A549 (cell line): ENCODE measurements at regions of chr7 and their contacts with region 1.

Region 1: DNA sequence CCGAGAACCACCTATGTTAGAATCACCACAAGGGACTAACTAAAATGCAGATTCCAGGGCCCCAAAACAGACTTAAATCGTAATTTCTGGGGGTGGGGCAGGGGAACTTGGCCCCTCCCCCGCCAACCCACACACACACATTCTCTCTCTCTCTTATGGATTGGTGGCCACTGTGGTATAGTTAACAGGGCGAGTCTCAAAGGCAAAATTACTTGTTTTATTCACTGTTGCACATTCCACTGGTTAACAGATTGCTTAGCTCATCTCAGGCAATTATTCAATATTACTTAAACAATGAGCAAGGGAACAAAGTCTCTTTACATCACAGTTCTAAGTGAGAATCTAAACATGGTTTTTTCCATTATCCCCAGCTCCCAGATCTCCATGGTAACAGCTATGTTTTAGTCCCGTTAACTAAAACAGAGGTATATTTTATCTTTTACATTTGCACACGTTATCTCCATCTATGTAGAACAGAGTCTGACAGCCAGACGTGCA is 38.5 kb downstream of the IGF2BP3 start:
- DNase-seq: peak in 1 of 2 experiments; percentile 20
- ATAC-seq: no peak
- H3K4me3 ChIP-seq: no peak overlapping the region
- H3K27ac ChIP-seq: peak overlapping the region; percentile 64 to 78; a peak in 5 of 6 replicates
- H3K4me1 ChIP-seq: peaks cover 42% of the 10 kb centered on the region
- CTCF ChIP-seq: no peak
- EP300 ChIP-seq: no peak
- POLR2A ChIP-seq: no peak
- RAD21 ChIP-seq: no peak

Region 2: GRCh38 chr7:23419845-23420244 is 11.9 kb before region 1 on chr7:
- CTCF ChIA-PET with region 1: interaction called, 24 read pairs
- POLR2A ChIA-PET with region 1: no interaction called
- DNase-seq: no peak
- ATAC-seq: no peak
- H3K4me3 ChIP-seq: no peak overlapping the region
- H3K27ac ChIP-seq: no peak overlapping the region
- H3K4me1 ChIP-seq: peaks cover 10% of the 10 kb centered on the region
- CTCF ChIP-seq: no peak
- EP300 ChIP-seq: no peak
- POLR2A ChIP-seq: no peak
- RAD21 ChIP-seq: no peak

Region 3: DNA sequence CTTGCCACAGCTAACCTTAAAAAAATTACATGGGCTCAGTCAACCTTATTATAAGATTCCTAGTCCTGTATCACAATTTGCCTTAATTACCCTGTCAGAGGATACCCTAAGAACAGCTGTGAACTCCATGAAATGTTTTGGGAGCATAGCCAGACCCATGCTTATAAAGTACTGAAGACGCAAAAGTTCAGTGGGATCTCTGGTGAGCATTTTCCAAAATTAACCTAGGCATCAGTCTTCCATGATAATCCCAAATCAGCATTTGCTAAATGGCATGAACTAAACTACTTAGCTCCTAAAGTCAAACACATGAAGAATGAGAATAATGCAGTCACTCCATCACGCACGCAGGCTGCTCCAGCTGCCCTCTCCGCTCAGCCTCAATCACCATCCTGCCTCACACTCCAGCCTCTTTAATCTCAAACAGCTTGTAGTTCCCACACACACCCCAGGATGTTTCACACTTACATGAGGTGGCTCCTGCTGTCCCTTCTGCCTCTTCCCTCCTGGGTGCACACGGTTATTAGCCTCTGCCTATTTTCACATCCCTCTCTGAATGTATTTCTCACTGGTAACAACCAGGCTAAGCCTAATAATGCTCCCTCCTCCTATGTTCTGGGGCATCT is 23.2 kb after region 1 on chr7:
- CTCF ChIA-PET with region 1: interaction called, 21 read pairs
- POLR2A ChIA-PET with region 1: no interaction called
- DNase-seq: no peak
- ATAC-seq: peak in 1 of 2 experiments; percentile 33; a peak in 2 of 6 replicates
- H3K4me3 ChIP-seq: no peak overlapping the region
- H3K27ac ChIP-seq: no peak overlapping the region
- H3K4me1 ChIP-seq: peaks cover 4% of the 10 kb centered on the region; the same call in 2 of the 3 replicates
- CTCF ChIP-seq: no peak
- EP300 ChIP-seq: no peak
- POLR2A ChIP-seq: no peak
- RAD21 ChIP-seq: no peak

Region 4: DNA sequence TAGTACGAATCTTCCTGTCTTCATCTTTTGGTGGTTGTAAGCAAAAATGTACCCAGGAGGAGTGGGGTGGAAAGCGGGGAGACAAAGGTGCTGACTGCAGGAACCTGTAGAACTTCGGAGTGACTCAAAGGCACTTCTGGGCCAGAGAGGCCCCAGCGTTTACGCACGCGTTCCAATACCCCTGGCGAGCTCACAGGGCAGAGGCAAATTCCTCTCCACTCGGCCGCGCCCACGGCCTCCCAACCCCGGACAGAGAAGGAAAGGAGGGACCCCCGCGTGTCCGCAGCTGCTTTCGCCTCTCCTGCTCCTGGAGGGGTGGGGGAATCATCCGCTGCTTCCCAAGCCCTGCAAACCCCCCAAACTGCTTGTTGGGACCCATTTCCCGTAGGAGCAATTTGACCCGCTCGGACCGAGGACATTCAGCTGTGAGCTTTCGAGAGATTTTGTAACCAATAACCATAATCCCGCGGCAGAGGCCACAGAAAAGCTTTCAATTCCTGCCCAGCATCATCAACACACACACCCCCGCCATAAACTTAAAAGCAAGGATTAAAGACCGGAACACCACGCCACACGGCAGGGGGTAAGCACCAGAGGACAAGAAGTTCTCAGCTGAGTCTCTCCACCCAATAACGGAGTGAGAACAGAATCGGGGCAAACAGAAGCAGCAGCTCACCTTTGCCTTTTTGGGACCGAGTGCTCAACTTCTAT is 36.2 kb after region 1 on chr7:
- CTCF ChIA-PET with region 1: interaction called, 17 read pairs
- POLR2A ChIA-PET with region 1: no interaction called
- DNase-seq: peak in 1 of 2 experiments; percentile 62
- ATAC-seq: peak; percentile 15 to 30; a peak in 3 of 6 replicates
- H3K4me3 ChIP-seq: peak overlapping the region; percentile 80
- H3K27ac ChIP-seq: peak overlapping the region; percentile 97 to 99
- H3K4me1 ChIP-seq: peaks cover 48% of the 10 kb centered on the region
- CTCF ChIP-seq: no peak
- EP300 ChIP-seq: no peak
- POLR2A ChIP-seq: no peak; the same call in 1 of the 2 replicates
- RAD21 ChIP-seq: no peak